OCI-LY7 (cell line): ENCODE measurements at regions of chr6 and their contacts with region 1.

Region 1: DNA sequence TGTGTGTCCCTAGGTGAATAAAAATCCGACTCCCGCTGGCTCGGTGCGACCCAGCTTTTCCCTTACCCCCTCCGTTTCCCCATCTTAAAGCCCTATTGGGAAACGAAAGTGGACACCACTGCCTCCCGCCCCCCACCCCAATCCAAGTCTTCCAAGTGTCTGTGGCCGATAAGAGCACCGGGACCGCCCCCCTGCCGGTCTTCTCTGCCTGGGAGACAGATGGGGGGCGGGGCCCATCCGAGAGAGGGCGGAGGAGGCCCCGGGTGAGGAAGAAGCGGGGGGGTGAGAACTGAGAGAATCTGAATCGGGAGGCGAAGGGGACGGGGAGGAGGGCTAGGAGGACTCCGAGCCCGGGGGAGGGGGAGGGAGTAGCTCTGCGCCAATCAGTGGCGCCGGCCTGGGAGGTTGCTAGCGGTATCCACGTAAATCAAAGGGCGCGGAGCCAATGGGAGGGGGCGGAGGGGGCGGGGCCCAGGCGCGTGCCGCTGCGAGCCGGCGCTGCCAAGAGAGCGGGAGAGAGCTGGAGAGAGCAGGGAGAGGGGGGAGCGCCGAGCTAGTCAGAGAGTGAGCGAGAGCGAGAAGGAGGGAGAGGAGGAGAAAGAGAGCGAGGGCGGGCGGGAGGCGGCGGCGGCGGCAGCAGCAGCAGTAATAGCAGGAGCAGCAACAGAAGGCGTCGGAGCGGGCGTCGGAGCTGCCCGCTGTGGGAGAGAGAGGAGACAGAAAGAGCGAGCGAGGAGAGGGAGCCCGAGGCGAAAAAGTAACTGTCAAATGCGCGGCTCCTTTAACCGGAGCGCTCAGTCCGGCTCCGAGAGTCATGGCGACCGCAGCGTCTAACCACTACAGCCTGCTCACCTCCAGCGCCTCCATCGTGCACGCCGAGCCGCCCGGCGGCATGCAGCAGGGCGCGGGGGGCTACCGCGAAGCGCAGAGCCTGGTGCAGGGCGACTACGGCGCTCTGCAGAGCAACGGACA is at the start of gene POU3F2:
- DNase-seq: peak; percentile 80
- H3K4me3 ChIP-seq: peak within 1 kb of the TSS; percentile 71
- H3K27ac ChIP-seq: no peak within 1 kb of the TSS
- H3K4me1 ChIP-seq: peaks cover 5% of the 10 kb centered on the region
- CTCF ChIP-seq: no peak
- total RNA-seq, gene POU3F2: not detected in 2 replicates

Region 2: DNA sequence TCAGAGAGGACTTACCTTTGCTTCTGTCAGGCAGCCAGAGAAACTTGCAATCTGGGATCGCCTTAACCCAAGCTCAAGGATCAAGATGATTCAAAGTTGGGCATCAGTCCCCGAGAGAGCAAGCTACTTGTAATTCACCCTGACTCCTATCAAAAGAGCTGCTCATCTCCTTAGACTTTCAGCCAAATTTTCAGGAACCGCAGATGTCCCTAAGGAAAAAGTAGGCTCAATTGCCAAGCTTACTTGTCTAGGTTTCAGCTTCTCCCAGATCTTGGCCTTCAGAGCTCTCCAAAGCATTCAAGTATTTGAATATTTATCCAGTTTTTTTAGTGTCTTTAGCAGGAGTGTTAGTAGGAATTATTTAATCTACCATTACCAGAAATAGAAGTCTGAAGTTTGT is 1117.3 kb before region 1 on chr6:
- CTCF ChIA-PET with region 1: no interaction called
- POLR2A ChIA-PET with region 1: no interaction called
- intact Hi-C with region 1: loop called (anchors 10 kb)
- DNase-seq: no peak
- H3K4me3 ChIP-seq: no peak overlapping the region
- H3K27ac ChIP-seq: no peak overlapping the region
- H3K4me1 ChIP-seq: no peaks in the 10 kb centered on the region
- CTCF ChIP-seq: no peak

Region 3: DNA sequence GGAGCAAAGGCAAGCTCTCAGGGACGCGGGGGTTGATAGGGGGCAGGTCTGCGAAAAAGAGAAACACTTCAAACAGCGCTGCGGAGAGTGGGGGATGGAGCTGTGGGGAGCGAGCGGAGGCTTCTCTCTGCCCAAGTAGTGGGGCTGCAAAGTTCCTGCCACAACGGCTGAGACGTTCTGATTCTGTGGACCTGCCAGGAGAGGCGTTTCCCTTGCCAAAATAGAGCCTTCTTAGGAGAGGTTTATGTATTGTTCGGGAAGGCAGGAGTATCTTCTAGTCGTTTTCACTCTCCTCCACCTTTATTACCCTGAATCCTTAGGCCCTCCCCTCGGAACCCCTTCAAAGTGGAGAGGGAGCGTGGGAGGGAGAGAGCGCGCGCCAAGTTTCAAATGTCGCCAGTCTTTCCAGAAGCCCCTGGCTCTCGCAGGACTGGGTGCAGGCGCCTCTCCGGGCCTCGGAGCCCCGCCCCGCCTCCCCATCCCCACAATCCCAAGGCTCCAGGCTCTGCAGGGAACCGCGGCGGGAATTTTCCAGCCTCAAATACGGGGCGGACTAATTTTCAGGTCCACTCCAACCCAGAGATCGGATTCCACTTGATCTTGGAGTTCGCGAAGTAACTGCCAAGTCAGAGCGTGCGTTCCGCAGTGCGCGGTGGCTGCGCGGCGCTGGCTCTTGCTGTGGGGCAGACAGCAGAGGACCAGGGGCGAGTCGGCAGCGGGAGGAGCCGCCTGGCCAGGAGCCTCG is 10.0 kb before region 1 on chr6:
- CTCF ChIA-PET with region 1: no interaction called
- POLR2A ChIA-PET with region 1: no interaction called
- intact Hi-C with region 1: no loop called
- DNase-seq: no peak
- H3K4me3 ChIP-seq: no peak overlapping the region
- H3K27ac ChIP-seq: no peak overlapping the region
- H3K4me1 ChIP-seq: no peaks in the 10 kb centered on the region
- CTCF ChIP-seq: no peak

Region 4: GRCh38 chr6:98880486-98880885 is 46.1 kb after region 1 on chr6:
- CTCF ChIA-PET with region 1: no interaction called
- POLR2A ChIA-PET with region 1: no interaction called
- intact Hi-C with region 1: no loop called
- DNase-seq: no peak
- H3K4me3 ChIP-seq: no peak overlapping the region
- H3K27ac ChIP-seq: no peak overlapping the region
- H3K4me1 ChIP-seq: no peaks in the 10 kb centered on the region
- CTCF ChIP-seq: no peak

Region 5: GRCh38 chr6:99032396-99032795 is 198.1 kb after region 1 on chr6:
- CTCF ChIA-PET with region 1: no interaction called
- POLR2A ChIA-PET with region 1: no interaction called
- intact Hi-C with region 1: loop called (anchors 5 kb)
- DNase-seq: no peak
- H3K4me3 ChIP-seq: no peak overlapping the region
- H3K27ac ChIP-seq: no peak overlapping the region
- H3K4me1 ChIP-seq: no peaks in the 10 kb centered on the region
- CTCF ChIP-seq: no peak